GM10248 (cell line): ENCODE measurements at regions of chr3 and their contacts with region 1.

Region 1: GRCh38 chr3:78260388-78260787 is 1220.5 kb downstream of the ROBO2 start:
- DNase-seq: no peak
- CTCF ChIP-seq: no peak

Region 2: GRCh38 chr3:78249294-78249693 is 11.1 kb before region 1 on chr3:
- CTCF ChIA-PET with region 1: interaction called, 10 read pairs
- POLR2A ChIA-PET with region 1: no interaction called
- DNase-seq: no peak
- CTCF ChIP-seq: no peak